GM12878 (cell line): ENCODE measurements at regions of chr11 and their contacts with region 1.

Region 1: GRCh38 chr11:64225612-64226506 is at the starts of genes NUDT22 and TRPT1:
- DNase-seq: no peak
- ATAC-seq: peak; percentile 80
- H3K4me3 ChIP-seq: peak within 1 kb of the TSS; percentile 90
- H3K27ac ChIP-seq: peak within 1 kb of the TSS; percentile 96
- H3K4me1 ChIP-seq: peaks cover 18% of the 10 kb centered on the region
- H3K27me3 ChIP-seq: no peaks in the 10 kb centered on the region
- CTCF ChIP-seq: peak; percentile 25 to 48 (median 36); a peak in 4 of 6 replicates
- EP300 ChIP-seq: no peak
- POLR2A ChIP-seq: peak; percentile 71
- RAD21 ChIP-seq: no peak; the same call in 1 of the 2 replicates
- polyA plus RNA-seq, gene NUDT22: 6.7 to 20.9 TPM
- polyA plus RNA-seq, gene TRPT1: 7.1 to 21.3 TPM

Region 2: DNA sequence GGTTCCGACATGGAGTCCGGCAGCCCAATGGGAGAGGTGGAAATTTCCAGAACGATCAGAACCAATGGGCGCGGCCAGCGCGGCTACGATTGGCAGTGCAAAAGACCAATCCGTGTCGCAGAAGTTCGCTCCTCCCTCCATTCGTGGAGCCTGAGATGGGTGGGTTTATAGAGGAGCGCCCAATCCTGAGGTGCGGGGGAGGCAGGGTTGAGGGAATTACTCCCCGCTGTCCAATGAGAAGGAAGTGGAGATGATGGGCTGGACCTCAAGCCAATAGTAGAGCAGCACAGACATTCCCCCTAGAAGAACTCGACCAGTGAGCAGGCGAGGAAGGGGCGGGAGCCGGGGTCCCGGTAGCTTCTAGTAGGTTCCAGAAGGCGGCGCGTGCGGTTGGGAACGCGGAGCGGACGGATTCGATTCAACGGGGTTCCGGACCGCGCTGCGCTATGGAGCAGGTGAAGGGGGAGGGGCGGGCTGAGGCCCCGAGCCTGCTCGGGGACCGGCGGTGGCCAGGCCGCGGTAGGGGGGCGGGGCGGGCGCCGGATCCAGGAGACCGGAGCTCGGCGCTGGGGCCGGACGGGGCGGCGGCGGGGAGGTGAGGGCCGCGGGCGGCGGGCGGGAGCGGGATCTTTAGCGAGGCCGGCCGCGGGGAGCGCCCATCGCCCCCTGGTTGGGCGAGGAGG is 39.9 kb before region 1 on chr11 and contains the start of gene STIP1:
- CTCF ChIA-PET with region 1: interaction called, 4 read pairs
- POLR2A ChIA-PET with region 1: interaction called, 11 read pairs
- RAD21 ChIA-PET with region 1: no interaction called
- SMC1A ChIA-PET with region 1: interaction called, 4 read pairs
- in situ Hi-C with region 1: no loop called
- intact Hi-C with region 1: no loop called
- DNase-seq: peak; percentile 100
- ATAC-seq: peak; percentile 93
- H3K4me3 ChIP-seq: peak within 1 kb of the TSS; percentile 80
- H3K27ac ChIP-seq: peak within 1 kb of the TSS; percentile 68
- H3K4me1 ChIP-seq: peaks cover 20% of the 10 kb centered on the region
- H3K27me3 ChIP-seq: no peaks in the 10 kb centered on the region
- CTCF ChIP-seq: peak; percentile 37 to 46 (median 40)
- EP300 ChIP-seq: peak in 1 of 2 experiments; percentile 94; a peak in 1 of 4 replicates
- POLR2A ChIP-seq: peak; percentile 16; the same call in 1 of the 2 replicates
- RAD21 ChIP-seq: no peak
- polyA plus RNA-seq, gene STIP1: 25.2 to 31.5 TPM

Region 3: GRCh38 chr11:64240394-64241174 is 14.7 kb after region 1 on chr11 and contains the start of gene FKBP2:
- CTCF ChIA-PET with region 1: interaction called, 11 read pairs
- POLR2A ChIA-PET with region 1: interaction called, 77 read pairs
- RAD21 ChIA-PET with region 1: interaction called, 9 read pairs
- SMC1A ChIA-PET with region 1: interaction called, 6 read pairs
- in situ Hi-C with region 1: no loop called
- intact Hi-C with region 1: no loop called
- DNase-seq: peak; percentile 87
- ATAC-seq: peak; percentile 70
- H3K4me3 ChIP-seq: peak within 1 kb of the TSS; percentile 89
- H3K27ac ChIP-seq: peak within 1 kb of the TSS; percentile 92
- H3K4me1 ChIP-seq: peaks cover 42% of the 10 kb centered on the region
- H3K27me3 ChIP-seq: no peaks in the 10 kb centered on the region
- CTCF ChIP-seq: no peak
- EP300 ChIP-seq: no peak; a peak in 1 of 4 replicates
- POLR2A ChIP-seq: peak; percentile 94
- RAD21 ChIP-seq: no peak
- polyA plus RNA-seq, gene FKBP2: 1.8 to 26.8 TPM

Region 4: DNA sequence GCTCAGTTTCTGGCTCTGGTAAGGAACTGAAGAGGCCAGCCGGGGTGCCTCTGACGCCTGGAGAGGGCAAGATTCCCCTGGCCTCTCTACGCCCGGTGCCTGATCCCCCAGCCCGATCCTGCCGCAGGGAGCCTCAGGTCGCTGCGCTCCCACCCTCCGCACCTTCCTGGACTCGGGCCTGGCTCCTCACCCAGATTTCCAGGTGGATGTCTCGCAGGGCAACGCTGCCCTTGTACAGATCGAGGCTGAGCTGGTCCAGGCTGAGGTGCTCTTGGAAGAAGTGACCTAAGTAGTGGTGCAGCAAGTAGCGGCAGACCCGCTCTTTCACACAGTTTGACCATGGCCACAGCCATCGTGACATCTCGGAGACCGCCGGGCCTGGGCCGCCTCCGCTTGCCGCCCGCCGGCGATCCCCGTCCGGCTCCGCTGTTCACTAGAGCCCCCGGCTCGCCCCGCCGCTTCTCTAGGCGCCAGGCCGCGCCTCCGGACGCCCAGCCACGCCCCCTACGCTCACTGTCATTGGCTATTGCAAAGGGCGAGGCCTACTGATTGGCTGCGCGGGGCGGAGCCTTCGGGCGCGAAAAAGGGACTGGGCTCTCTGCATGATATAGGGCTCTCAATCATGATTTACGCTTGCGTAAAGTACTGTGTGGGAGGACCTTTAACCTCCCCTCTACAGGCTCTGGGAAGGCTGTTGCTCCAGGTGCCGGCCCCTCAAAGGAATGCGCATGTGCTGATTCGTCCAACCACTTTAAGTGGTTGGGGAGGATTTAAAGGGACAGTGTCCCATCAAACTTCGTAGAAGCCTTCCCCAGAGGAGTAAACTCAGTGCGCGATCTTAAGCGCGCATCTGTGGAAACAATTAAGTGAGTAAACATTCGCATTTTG is 691.2 kb after region 1 on chr11 and contains the start of gene ATG2A:
- CTCF ChIA-PET with region 1: no interaction called
- POLR2A ChIA-PET with region 1: no interaction called
- RAD21 ChIA-PET with region 1: no interaction called
- SMC1A ChIA-PET with region 1: no interaction called
- in situ Hi-C with region 1: no loop called
- intact Hi-C with region 1: no loop called
- DNase-seq: peak; percentile 99
- ATAC-seq: peak; percentile 98
- H3K4me3 ChIP-seq: peak within 1 kb of the TSS; percentile 86
- H3K27ac ChIP-seq: peak within 1 kb of the TSS; percentile 91
- H3K4me1 ChIP-seq: peaks cover 6% of the 10 kb centered on the region
- H3K27me3 ChIP-seq: no peaks in the 10 kb centered on the region
- CTCF ChIP-seq: no peak
- EP300 ChIP-seq: no peak
- POLR2A ChIP-seq: peak; percentile 86
- RAD21 ChIP-seq: no peak
- polyA plus RNA-seq, gene ATG2A: 0.08 to 0.51 TPM